ENCODE measurements at regions of chr19 and their contacts with region 1.

Region 1: GRCh38 chr19:33771384-33772101 is 25.1 kb upstream of the KCTD15 start:
- DNase-seq: peak; percentile 78
- H3K4me3 Mint-ChIP-seq: no peak overlapping the region
- H3K27ac Mint-ChIP-seq: no peak overlapping the region
- H3K4me1 Mint-ChIP-seq: no peaks in the 10 kb centered on the region
- H3K27me3 Mint-ChIP-seq: peaks cover 16% of the 10 kb centered on the region

Region 2: GRCh38 chr19:33416307-33417215 is 355.0 kb before region 1 on chr19:
- CTCF ChIA-PET with region 1: interaction called, 34 read pairs
- POLR2A ChIA-PET with region 1: no interaction called
- intact Hi-C with region 1: loop called (anchors 1 kb)
- DNase-seq: peak; percentile 79
- H3K4me3 Mint-ChIP-seq: peak overlapping the region; percentile 43
- H3K27ac Mint-ChIP-seq: no peak overlapping the region
- H3K4me1 Mint-ChIP-seq: peaks cover 7% of the 10 kb centered on the region
- H3K27me3 Mint-ChIP-seq: no peaks in the 10 kb centered on the region

Region 3: DNA sequence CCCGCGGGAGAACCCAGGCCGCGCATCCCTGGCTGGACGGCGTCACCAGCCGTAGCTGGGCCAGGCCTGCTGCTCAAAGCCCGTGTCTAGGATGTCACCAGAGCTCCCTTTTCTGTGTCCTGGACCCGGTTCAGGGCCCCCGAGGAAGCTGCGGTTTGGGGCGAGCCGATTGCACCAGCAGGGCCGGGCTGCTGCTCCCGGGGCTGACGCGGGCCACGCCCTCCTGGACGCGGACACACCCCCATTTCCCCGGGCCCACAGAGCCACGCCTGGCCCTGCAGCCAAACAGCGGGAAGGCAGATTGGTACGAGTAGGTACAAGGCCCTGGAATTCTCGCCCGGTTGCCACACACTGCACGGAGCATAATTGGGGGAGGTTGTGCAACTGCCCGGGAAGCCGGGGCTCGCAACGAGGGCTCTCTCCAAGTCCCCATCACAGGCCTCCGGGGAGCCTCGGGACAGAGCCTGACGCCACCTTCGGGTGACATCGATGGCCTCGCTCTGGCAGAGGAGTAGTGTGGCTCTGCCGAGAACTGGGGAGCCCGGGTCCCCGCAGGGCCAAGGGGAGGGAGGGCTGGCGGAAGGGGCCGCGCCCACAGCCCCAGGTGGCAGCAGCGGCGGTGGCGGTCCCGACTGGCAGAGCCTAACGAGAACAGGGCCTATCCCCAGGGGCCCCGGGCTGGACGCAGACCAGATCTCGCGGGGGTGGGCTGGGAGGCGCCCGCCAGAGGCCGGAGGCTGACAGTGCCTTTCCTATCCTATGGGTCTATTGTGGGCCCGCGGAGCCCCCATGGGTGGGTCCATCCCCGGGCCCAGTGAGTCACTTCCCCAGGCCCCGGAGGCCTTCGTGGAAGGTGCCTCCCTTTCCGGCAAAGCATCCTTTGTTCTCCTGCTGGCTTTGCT is 48.6 kb after region 1 on chr19:
- CTCF ChIA-PET with region 1: no interaction called
- POLR2A ChIA-PET with region 1: no interaction called
- intact Hi-C with region 1: no loop called
- DNase-seq: peak; percentile 85
- H3K4me3 Mint-ChIP-seq: peak overlapping the region; percentile 76
- H3K27ac Mint-ChIP-seq: peak overlapping the region; percentile 59
- H3K4me1 Mint-ChIP-seq: peaks cover 19% of the 10 kb centered on the region
- H3K27me3 Mint-ChIP-seq: no peaks in the 10 kb centered on the region